ENCODE measurements at regions of chr20 and their contacts with region 1.

Region 1: GRCh38 chr20:63495741-63496595 is 2.9 kb downstream of the EEF1A2 start:
- DNase-seq: no peak
- H3K4me3 ChIP-seq: no peak overlapping the region
- H3K27ac ChIP-seq: no peak overlapping the region
- H3K27me3 ChIP-seq: peaks cover 23% of the 10 kb centered on the region
- CTCF ChIP-seq: peak; percentile 84

Region 2: DNA sequence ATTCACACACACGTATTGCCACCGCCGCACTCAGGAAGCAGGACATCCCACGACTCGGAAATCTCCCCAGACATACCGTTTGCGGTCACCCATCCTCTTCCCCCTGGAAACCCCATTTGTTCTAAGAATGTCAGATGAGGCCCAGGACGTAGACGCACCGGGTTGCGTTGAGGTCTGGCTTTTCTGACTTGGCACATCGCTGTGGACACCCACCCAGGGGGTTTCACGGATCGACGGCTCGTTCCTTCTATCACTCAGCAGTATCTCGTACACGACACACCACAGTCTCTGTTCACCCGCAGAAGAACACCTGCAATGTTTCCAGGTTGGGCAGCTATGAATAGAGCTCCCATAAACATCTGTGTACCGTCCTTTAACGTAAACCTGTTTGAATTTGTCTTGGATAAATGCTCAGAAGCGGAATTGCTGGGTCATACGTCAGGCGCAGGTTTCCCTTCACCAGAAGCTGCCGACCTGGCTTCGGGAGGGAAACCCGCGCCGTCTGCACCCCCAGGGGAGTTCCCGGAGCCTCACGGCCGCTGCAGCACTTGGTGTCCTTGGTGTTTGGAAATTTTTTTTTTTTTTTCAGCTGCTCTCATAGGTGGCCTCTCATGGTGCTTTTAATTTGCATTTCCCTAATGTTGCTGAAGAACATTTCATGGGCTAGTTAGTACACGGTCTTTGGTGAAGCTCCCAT is 12.3 kb after region 1 on chr20:
- CTCF ChIA-PET with region 1: interaction called, 11 read pairs
- POLR2A ChIA-PET with region 1: interaction called, 5 read pairs
- DNase-seq: no peak
- H3K4me3 ChIP-seq: no peak overlapping the region
- H3K27ac ChIP-seq: no peak overlapping the region
- H3K27me3 ChIP-seq: peaks cover 33% of the 10 kb centered on the region
- CTCF ChIP-seq: no peak